ENCODE measurements at regions of chr5 and their contacts with region 1.

Region 1: GRCh38 chr5:11429254-11429653 is 475.0 kb downstream of the CTNND2 start:
- DNase-seq: no peak
- ATAC-seq: no peak
- H3K4me3 Mint-ChIP-seq: no peak overlapping the region
- H3K27ac Mint-ChIP-seq: no peak overlapping the region
- H3K4me1 Mint-ChIP-seq: no peaks in the 10 kb centered on the region
- H3K27me3 Mint-ChIP-seq: no peaks in the 10 kb centered on the region
- CTCF ChIP-seq: no peak

Region 2: DNA sequence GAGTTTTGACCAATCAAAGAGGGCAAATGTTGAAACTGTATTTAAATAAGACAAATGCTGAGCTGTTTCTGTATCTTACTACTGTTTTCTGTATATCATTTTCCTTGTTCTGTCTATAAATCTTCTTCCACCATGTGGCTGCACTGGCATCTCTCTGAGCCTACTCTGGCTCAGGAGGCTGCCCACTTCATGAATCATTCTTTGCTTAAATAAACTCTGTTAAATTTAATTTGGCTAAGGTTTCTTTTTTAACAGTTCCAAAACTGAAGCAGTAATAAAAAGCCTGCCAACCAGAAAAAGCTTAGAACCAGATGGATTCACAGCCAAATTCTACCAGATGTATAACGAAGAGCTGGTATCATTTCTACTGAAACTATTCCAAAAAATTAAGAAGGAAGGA is 1758.9 kb before region 1 on chr5:
- CTCF ChIA-PET with region 1: no interaction called
- POLR2A ChIA-PET with region 1: no interaction called
- intact Hi-C with region 1: no loop called
- DNase-seq: no peak
- ATAC-seq: no peak
- H3K4me3 Mint-ChIP-seq: no peak overlapping the region
- H3K27ac Mint-ChIP-seq: no peak overlapping the region
- H3K4me1 Mint-ChIP-seq: no peaks in the 10 kb centered on the region
- H3K27me3 Mint-ChIP-seq: no peaks in the 10 kb centered on the region
- CTCF ChIP-seq: no peak

Region 3: GRCh38 chr5:11504892-11505545 is 75.8 kb after region 1 on chr5:
- CTCF ChIA-PET with region 1: no interaction called
- POLR2A ChIA-PET with region 1: no interaction called
- intact Hi-C with region 1: loop called (anchors 2 kb)
- DNase-seq: no peak
- ATAC-seq: no peak
- H3K4me3 Mint-ChIP-seq: no peak overlapping the region
- H3K27ac Mint-ChIP-seq: no peak overlapping the region
- H3K4me1 Mint-ChIP-seq: no peaks in the 10 kb centered on the region
- H3K27me3 Mint-ChIP-seq: no peaks in the 10 kb centered on the region
- CTCF ChIP-seq: no peak